Cardiac septum (tissue), 1 donor: ENCODE measurements at regions of chr1 and their contacts with region 1.

Region 1: GRCh38 chr1:167059045-167059808 is 30.9 kb downstream of the GPA33 start:
- DNase-seq: no peak

Region 2: DNA sequence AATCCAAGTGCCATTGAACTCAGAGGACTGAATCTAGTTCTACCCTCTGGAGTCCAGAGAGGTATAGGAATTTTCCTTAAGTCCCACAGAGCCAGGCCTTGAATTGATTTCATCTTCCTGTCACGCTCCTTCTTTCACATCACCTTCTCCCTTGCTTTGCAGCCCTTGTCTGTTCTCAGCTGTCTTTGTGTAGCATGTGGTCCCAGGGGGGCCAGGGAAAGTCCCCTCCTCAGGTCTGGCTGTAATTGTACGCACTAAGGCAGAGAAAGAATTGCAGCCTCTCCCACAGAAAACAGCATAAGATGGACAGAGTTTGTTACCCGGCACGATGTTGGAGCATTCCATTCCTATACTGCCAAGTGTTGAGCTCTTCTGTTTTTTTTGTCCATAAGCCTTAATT is 1046.0 kb before region 1 on chr1:
- intact Hi-C with region 1: no loop called
- DNase-seq: no peak

Region 3: DNA sequence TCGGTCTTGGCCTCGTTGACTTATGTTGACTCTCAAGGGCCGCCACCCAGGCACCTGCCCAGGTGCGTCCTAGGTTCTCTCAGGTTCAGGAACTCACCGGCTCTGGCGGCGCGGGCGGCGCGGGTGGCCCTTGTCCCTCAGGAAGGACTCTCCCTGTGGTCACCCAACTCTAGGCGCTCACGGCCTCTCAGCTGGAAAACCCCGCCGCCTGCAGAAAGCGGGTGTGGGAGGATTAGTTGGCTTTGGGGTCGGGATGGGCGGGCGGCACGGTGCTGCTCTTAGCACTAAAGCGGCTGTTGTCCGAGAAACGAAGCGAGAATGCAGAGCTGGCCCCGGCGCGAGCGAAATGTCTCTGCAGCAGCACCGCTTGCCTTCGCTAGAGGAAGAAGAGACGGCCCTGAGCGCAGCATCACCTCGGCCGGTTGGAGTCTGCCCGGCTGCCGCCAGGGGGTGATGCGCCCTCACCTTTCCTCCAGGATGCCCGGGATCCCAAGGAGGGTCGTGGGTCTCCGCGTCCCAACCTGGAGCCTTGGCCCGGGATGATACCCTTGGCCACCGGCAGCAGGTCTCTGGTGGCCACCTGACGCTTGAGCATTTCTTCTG is 175.1 kb before region 1 on chr1:
- intact Hi-C with region 1: loop called (anchors 1 kb)
- DNase-seq: peak; percentile 77

Region 4: GRCh38 chr1:166910396-166910994 is 148.7 kb before region 1 on chr1:
- intact Hi-C with region 1: loop called (anchors 1 kb)
- DNase-seq: no peak

Region 5: DNA sequence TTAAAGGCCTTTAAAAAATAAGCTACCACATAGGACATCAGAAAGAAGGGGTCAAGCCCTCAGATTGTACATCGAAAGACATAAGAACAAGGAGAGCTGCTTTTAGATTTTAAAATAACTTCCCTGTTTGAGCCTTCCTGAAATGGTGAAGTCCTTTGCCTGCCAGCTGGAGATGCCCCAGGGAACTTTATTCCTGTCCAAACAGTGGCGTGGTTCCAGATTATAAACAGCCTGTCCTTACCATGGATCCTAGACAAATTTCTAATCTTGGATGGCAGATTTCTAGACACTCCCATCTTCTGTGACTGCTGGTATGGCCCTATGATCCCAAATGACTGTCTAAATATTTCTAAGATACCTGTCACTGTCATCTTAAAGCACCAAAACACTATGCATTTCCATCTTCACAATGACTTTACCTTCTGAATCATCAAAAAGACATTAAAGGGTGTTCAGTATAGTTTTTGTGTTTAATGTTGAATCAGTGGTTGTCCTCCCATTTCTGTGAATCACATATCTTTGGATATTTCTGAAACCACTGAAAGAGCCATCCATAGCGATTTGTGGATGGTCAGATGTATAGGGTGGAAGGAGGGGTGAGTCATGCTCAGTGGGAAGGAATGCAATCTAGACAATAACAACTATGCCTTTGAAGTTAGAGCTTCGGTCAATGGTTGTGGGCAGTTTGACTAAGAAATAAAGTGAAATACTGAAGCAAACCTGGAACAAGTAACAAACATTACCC is 107.1 kb before region 1 on chr1:
- intact Hi-C with region 1: no loop called
- DNase-seq: no peak

Region 6: DNA sequence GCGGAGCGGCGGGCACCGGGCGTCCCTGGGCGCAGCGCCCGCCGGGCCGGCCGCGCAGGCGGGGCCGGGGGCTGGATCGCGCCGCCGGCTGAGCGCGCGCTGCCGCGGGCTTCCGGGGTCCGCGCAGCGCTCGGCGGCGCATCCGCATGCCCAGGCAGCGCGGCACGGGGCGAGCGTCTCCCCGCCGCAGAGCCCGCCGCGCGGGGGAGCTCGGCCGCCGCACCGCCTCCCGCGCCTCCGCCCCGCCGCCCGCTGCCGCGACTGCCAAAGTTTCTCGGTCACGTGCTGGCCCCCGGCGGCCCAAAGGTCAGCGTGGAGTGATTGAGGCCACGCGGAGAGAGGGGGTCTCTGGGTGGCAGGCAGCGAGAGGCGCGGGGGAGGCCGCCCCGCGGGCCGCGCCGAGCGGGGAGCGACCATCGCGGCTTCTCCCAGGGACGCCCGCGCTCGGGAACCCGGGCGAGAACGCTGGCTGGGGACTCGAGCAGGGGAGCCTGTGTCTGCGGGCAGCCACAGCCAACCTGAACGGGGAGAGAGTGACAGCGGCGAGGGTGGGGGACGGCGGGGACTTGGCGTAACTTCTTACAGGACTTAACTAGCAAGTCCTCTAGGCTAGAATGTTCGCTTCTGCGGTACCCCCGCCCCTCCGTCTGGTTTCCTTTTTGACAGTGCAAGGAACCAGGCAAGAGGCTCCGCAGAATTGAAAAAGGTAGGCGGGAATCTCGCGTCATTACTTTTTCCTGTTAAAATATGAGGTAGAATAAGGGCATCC is 83.7 kb before region 1 on chr1 and contains the start of gene ILDR2:
- intact Hi-C with region 1: loop called (anchors 5 kb)
- DNase-seq: no peak
- total RNA-seq, gene ILDR2: 23.1 TPM